AG04450 (cell line): ENCODE measurements at regions of chr2 and their contacts with region 1.

Region 1: DNA sequence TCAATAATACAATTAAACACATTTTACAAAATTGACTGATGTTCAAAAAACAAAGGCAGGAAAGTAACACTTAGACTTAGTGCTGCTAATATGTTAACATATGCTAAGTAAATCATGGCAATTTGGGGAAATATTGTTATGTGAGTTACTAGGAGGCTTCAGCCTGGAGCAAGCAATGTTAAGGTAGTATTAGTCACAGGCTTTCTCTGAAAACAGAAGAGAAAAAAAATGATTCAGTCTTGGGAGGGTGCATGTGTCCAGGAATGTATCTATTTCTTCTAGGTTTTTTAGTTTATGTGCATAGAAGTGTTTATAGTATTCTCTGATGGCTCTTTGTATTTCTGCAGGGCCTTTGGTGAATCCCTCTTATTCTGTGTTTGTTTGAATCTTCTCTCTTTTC is 345.8 kb upstream of the TFPI start:
- DNase-seq: no peak
- H3K4me3 ChIP-seq: no peak overlapping the region
- H3K27ac ChIP-seq: no peak overlapping the region
- H3K27me3 ChIP-seq: no peaks in the 10 kb centered on the region
- CTCF ChIP-seq: no peak

Region 2: GRCh38 chr2:187917535-187917934 is 17.5 kb after region 1 on chr2:
- CTCF ChIA-PET with region 1: interaction called, 10 read pairs
- POLR2A ChIA-PET with region 1: no interaction called
- DNase-seq: peak; percentile 7
- H3K4me3 ChIP-seq: no peak overlapping the region
- H3K27ac ChIP-seq: no peak overlapping the region
- H3K27me3 ChIP-seq: no peaks in the 10 kb centered on the region
- CTCF ChIP-seq: no peak